WTC11 (cell line): ENCODE measurements at regions of chr10 and their contacts with region 1.

Region 1: DNA sequence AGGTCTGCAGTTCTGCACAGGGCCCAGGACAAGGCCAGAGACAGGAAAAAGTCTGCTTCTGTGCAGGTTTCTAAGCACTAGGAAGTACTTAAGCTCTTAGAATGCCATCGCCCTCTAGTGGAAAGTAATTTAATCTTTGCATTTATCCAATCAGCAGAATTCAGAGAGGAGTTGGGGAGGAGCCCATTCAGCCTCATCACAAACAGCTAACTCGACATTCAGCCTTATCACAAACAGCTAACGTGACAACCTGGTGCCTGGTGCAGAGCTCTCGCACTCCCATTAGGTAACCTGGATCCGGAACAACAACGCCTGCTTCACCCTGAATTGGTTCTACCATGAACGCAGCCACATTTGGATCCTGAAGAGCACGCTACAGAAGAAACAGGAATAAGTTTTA is 15.2 kb downstream of the OAT start:
- DNase-seq: peak; percentile 30
- ATAC-seq: peak; percentile 98
- H3K4me3 Mint-ChIP-seq: no peak overlapping the region
- H3K27ac Mint-ChIP-seq: peak overlapping the region; percentile 95
- H3K4me1 Mint-ChIP-seq: peaks cover 9% of the 10 kb centered on the region
- H3K27me3 Mint-ChIP-seq: no peaks in the 10 kb centered on the region
- CTCF ChIP-seq: no peak

Region 2: GRCh38 chr10:124347956-124348355 is 55.6 kb before region 1 on chr10:
- CTCF ChIA-PET with region 1: interaction called, 12 read pairs
- POLR2A ChIA-PET with region 1: no interaction called
- DNase-seq: peak; percentile 46
- ATAC-seq: peak; percentile 91
- H3K4me3 Mint-ChIP-seq: no peak overlapping the region
- H3K27ac Mint-ChIP-seq: no peak overlapping the region
- H3K4me1 Mint-ChIP-seq: 0 out of 2 replicates have a peak, but pooled peaks cover 2% of the 10 kb centered on the region
- H3K27me3 Mint-ChIP-seq: no peaks in the 10 kb centered on the region; the same call in 1 of the 2 replicates
- CTCF ChIP-seq: 0 out of 2 replicates have a peak, but pooled peaks have one; percentile 12

Region 3: DNA sequence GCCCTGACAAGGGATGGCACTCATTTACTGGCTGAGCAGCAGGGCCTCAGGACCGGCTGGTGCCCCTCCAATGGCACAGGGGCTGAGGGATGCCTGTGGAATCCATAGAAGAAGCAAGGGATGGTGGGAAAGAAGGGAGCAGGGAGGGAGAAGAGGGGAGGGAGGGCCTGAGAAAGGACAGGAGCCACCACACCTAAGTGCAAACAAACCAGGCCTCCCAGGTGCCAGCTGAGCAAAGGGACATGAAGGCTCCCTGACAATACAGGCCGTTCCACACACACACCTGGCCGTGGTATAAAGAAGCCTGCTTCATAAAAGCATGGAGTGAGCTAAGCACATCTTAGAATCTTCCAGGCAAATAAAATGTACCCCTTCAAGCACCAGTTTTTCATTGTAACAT is 38.9 kb before region 1 on chr10:
- CTCF ChIA-PET with region 1: interaction called, 10 read pairs
- POLR2A ChIA-PET with region 1: no interaction called
- DNase-seq: no peak
- ATAC-seq: no peak
- H3K4me3 Mint-ChIP-seq: no peak overlapping the region
- H3K27ac Mint-ChIP-seq: no peak overlapping the region
- H3K4me1 Mint-ChIP-seq: peaks cover 11% of the 10 kb centered on the region
- H3K27me3 Mint-ChIP-seq: no peaks in the 10 kb centered on the region; the same call in 1 of the 2 replicates
- CTCF ChIP-seq: no peak

Region 4: DNA sequence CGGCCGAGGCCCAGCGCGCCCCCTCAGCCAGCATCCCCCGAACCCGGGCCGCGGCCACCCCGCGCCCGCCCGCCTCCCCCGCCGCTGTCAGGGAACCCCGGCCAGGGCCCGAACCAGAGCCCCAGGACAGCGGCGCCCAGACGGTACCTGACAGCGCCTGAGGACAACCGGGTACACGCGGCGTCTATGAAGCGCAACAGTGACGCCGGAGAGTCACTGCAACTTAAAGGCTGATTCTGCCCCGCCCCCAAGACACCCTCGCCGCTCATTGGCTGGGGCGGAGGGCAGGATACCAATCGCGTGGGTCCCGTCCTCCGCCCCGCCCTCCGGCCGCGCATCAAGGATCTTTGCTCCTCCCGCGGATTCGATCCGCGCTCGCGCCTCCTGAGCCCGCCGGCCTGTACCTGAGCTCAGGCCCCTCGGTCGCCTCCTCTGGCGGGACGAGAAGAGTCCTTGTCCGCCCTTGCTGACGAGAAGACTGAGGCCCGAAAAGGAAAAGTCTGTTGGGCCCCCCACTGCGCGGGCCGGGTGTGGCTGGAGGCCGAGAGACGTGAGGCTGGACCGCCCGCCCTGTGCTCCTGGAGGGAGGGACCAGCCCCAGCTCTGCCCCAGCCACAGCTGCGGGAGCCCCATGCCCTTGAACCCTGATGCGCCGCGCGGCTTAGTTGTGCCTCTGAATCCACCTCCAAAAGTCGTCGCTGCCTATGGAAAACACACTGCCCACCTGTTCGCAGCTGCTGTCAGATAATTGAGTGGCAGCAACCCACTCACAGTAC is 15.4 kb after region 1 on chr10 and contains the start of gene OAT:
- CTCF ChIA-PET with region 1: interaction called, 15 read pairs
- POLR2A ChIA-PET with region 1: no interaction called
- DNase-seq: peak; percentile 99
- ATAC-seq: peak; percentile 97
- H3K4me3 Mint-ChIP-seq: peak within 1 kb of the TSS; percentile 81
- H3K27ac Mint-ChIP-seq: peak within 1 kb of the TSS; percentile 95
- H3K4me1 Mint-ChIP-seq: peaks cover 51% of the 10 kb centered on the region
- H3K27me3 Mint-ChIP-seq: peaks cover 18% of the 10 kb centered on the region
- CTCF ChIP-seq: no peak
- total RNA-seq, gene OAT: 96.1 to 117 TPM (median 97.4 TPM) in 3 replicates

Region 5: GRCh38 chr10:124526621-124527267 is 123.2 kb after region 1 on chr10:
- CTCF ChIA-PET with region 1: no interaction called
- POLR2A ChIA-PET with region 1: no interaction called
- DNase-seq: no peak
- ATAC-seq: no peak
- H3K4me3 Mint-ChIP-seq: no peak overlapping the region
- H3K27ac Mint-ChIP-seq: no peak overlapping the region
- H3K4me1 Mint-ChIP-seq: peaks cover 22% of the 10 kb centered on the region
- H3K27me3 Mint-ChIP-seq: no peaks in the 10 kb centered on the region; the same call in 1 of the 2 replicates
- CTCF ChIP-seq: no peak